ENCODE measurements at regions of chr10 and their contacts with region 1.

Region 1: DNA sequence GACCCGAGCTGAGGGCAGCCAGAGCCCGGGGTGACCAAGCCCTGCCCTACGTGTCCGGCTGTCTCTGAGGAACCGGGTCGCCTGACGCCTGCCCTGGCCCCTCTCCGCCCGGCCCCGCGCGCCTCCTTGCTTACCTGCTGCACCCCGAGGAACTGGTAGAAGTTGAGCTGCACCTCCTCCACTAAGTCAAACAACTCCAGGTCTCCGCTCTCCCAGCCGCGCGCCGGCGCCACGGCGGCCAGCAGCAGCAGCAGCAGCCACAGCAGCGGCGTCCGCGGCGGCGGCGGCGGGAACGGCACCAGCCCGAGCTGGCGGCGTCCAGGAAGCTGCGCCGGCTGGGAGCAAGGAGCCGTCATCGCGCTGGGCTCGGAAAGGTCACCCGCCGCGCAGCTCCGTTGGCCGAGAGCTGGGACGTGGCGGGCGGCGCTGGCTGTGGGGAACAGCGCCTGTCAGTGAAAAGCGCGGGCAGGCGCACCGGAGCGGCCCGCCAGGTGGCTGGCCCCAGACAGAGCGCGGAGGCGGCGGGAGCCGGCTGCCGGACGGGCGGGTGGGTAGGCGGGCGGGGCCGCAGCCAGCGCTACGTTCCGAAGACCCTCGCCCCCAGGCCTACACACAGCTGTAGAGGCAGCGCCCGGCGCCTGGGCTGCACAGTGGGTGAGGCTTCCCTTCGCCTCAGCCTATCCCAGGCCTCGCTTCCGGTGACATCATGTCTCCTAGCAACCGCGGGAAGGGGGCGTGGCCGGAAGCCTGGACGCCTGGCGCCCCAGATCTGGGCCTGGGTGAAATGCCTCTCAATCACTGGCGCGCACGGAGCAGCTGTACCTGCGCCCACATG is at the start of gene DNAJC1:
- DNase-seq: peak; percentile 92 to 97
- ATAC-seq: peak; percentile 97
- H3K4me3 ChIP-seq: peak within 1 kb of the TSS; percentile 74 to 88 (median 84)
- H3K27ac ChIP-seq: peak within 1 kb of the TSS; percentile 82 to 96 (median 94)
- H3K4me1 ChIP-seq: peaks cover 14 to 18% of the 10 kb centered on the region in 2 donors
- H3K27me3 ChIP-seq: no peaks in the 10 kb centered on the region
- CTCF ChIP-seq: peak in 4 of 5 experiments; percentile 5 to 43 (median 26)
- POLR2A ChIP-seq: peak; percentile 85 to 90
- total RNA-seq, gene DNAJC1: 24.1 to 56.4 (median 35.7) TPM

Region 2: GRCh38 chr10:21754410-21755011 is 248.8 kb before region 1 on chr10:
- in situ Hi-C with region 1: no loop called
- intact Hi-C with region 1: no loop called
- DNase-seq: no peak
- ATAC-seq: no peak
- H3K4me3 ChIP-seq: no peak overlapping the region
- H3K27ac ChIP-seq: no peak overlapping the region
- H3K4me1 ChIP-seq: no peaks in the 10 kb centered on the region
- H3K27me3 ChIP-seq: no peaks in the 10 kb centered on the region
- CTCF ChIP-seq: no peak
- POLR2A ChIP-seq: no peak

Region 3: DNA sequence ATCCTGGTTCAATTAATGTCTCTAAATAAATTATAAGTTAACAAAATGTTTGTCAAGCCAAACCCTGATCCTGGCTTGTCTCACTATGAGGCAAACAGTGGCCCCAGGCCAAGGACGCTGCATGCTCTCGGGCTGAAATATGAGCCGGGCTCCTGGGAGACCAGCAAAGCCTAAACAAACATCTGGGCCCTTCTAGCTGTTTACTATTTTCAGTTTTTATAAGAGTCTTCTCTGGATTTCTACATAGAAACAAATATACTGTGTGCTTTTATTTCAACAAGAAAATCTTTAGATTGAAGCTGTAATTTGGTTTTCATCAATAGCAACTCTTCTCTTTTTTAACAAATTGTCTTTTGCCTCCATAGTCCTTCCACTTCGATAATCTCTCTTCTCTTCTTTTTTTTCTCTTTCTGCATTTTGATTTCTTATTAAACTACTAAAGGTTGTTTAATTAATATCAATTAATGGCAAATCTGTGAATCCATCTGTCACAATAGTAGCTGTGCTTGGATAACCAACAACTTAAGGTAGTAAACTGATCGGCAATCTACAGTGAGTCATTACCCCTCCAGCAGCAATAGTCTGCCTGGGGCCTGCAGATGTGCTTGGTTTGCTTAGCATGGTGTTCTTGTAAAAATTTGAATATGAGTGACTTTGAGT is 83.6 kb after region 1 on chr10:
- in situ Hi-C with region 1: no loop called
- intact Hi-C with region 1: loop called (anchors 2 kb)
- DNase-seq: peak; percentile 85 to 86
- ATAC-seq: peak; percentile 99
- H3K4me3 ChIP-seq: peak overlapping the region in 3 of 4 donors; percentile 6 to 32 (median 12)
- H3K27ac ChIP-seq: peak overlapping the region; percentile 62 to 72 (median 70)
- H3K4me1 ChIP-seq: peaks cover 13 to 16% of the 10 kb centered on the region in 2 donors
- H3K27me3 ChIP-seq: no peaks in the 10 kb centered on the region
- CTCF ChIP-seq: no peak
- POLR2A ChIP-seq: no peak

Region 4: DNA sequence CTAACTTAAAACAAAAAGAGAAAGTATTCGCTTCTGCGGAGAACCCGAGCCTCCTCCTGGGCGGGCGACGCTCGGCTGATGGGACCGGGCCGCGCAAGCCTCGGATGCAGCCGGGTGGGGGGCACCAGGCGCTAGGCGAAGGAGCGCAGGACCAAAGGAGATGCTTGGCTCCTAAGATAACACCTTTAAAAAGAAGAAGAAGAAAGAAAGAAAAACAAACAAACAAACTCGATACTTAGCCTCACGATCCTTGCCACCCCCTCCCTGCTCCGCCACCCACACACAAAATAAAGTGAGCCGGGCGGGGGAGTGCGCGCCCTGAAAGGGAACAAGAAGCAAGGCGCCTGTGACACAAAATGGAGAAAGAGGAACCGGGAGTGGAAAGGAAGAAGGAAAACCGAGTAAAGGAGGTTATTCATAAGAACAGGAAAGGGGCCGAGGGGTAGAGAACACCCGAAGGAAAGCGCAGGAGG is 248.5 kb after region 1 on chr10:
- in situ Hi-C with region 1: loop called in 1 of 4 experiments (anchors 25 kb)
- intact Hi-C with region 1: loop called (anchors 5 kb)
- DNase-seq: peak; percentile 16 to 35
- ATAC-seq: peak; percentile 68 to 74
- H3K4me3 ChIP-seq: peak overlapping the region; percentile 72 to 84 (median 80)
- H3K27ac ChIP-seq: peak overlapping the region; percentile 84 to 87 (median 86)
- H3K4me1 ChIP-seq: peaks cover 7 to 9% of the 10 kb centered on the region in 2 donors
- H3K27me3 ChIP-seq: no peaks in the 10 kb centered on the region
- CTCF ChIP-seq: no peak
- POLR2A ChIP-seq: no peak

Region 5: GRCh38 chr10:22714479-22715289 is 711.4 kb after region 1 on chr10 and contains the start of gene PIP4K2A:
- in situ Hi-C with region 1: no loop called
- intact Hi-C with region 1: loop called (anchors 1 kb)
- DNase-seq: peak; percentile 16 to 30
- ATAC-seq: peak; percentile 79 to 88
- H3K4me3 ChIP-seq: peak within 1 kb of the TSS; percentile 75 to 93 (median 80)
- H3K27ac ChIP-seq: peak within 1 kb of the TSS; percentile 63 to 72 (median 68)
- H3K4me1 ChIP-seq: peaks cover 0 to 16% of the 10 kb centered on the region in 2 donors
- H3K27me3 ChIP-seq: peaks cover 0 to 15% (median 9%) of the 10 kb centered on the region in 3 donors
- CTCF ChIP-seq: no peak
- POLR2A ChIP-seq: peak; percentile 30 to 37
- total RNA-seq, gene PIP4K2A: 3.9 to 7.5 (median 4.7) TPM

Region 6: GRCh38 chr10:23095404-23095965 is 1092.2 kb after region 1 on chr10 and contains the start of gene MSRB2:
- in situ Hi-C with region 1: no loop called
- intact Hi-C with region 1: loop called (anchors 5 kb)
- DNase-seq: peak; percentile 92 to 96
- ATAC-seq: peak; percentile 95 to 96
- H3K4me3 ChIP-seq: peak within 1 kb of the TSS; percentile 76 to 89 (median 81)
- H3K27ac ChIP-seq: peak within 1 kb of the TSS; percentile 81 to 95 (median 92)
- H3K4me1 ChIP-seq: peaks cover 29 to 33% of the 10 kb centered on the region in 2 donors
- H3K27me3 ChIP-seq: no peaks in the 10 kb centered on the region
- CTCF ChIP-seq: no peak
- POLR2A ChIP-seq: peak; percentile 90 to 92
- total RNA-seq, gene MSRB2: 24.3 to 43.5 (median 29.4) TPM